ENCODE measurements at regions of chr17 and their contacts with region 1.

Region 1: DNA sequence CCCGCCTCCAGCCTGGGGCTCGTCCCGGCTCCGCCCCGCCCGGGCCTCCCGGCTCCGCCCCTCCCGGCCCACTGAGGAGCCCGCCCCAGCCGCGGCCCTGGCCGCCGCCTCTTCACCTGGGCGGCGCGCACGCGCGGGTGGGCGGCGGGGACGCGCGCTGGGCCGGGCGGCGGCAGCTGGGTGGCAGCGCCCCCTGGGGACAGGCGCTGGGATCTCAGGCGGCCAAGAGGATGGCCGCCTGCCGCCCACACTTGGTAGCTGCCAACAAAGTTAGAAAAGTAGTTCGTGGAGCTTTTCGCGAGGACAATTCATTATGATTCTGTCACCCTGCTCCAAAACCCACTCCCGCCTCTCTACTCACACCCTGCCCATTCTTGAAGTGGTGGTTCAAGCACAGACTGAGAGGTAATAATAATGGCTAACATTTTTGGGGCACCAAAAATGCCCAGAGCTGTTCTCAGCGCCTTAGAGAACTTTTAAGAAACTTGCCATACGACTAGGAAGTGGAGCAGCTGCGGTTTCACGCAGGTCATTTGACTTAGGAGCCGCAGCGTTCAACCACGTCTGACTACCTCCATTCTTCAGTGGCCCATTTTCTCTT is 340 bp upstream of the MYO1D start:
- DNase-seq: peak; percentile 92
- H3K4me3 Mint-ChIP-seq: peak overlapping the region; percentile 54
- H3K27ac Mint-ChIP-seq: peak overlapping the region; percentile 48
- H3K4me1 Mint-ChIP-seq: peaks cover 15% of the 10 kb centered on the region
- H3K27me3 Mint-ChIP-seq: no peaks in the 10 kb centered on the region

Region 2: DNA sequence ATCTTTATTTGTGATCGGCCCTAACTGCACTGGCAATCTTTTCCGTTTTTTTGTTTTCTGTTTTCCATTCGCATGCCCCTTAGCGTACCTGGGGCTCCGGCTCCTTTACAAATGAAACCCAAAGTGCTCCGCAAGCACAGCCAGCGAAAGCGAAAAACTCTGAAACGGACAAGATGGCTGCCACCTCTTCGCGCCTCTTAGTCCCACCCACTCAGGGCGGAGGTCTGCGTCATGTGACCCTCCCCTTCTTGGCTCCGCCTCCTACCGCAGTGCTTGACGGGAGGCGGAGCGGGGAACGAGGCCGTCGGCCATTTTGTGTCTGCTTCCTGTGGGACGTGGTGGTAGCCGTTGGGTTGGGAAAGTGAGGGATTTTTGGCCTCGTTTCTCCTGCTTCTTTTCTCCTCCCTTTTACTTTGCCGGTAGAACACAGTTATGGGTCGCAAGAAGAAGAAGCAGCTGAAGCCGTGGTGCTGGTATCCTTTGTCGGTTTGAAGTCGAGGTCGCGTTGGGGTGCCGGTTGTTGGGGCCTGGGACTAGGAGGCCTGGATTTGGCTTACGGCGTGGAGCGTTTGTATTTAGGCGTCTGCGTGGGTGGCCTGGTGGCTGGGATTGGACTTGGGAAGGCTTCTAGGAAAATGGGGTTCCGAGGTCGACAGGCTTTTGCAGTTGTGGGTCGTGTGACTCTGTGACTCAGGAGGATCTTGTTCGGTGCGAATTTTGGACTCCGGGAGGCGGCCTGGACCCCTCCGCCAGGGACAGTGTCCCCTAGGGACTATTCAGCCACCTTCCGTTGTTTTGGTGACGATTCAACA is 527.2 kb before region 1 on chr17 and contains the start of gene ZNF207:
- CTCF ChIA-PET with region 1: no interaction called
- intact Hi-C with region 1: loop called (anchors 2 kb)
- DNase-seq: peak; percentile 98
- H3K4me3 Mint-ChIP-seq: peak within 1 kb of the TSS; percentile 97
- H3K27ac Mint-ChIP-seq: peak within 1 kb of the TSS; percentile 99
- H3K4me1 Mint-ChIP-seq: peaks cover 40% of the 10 kb centered on the region
- H3K27me3 Mint-ChIP-seq: no peaks in the 10 kb centered on the region
- total RNA-seq, gene ZNF207: 213 to 230 TPM

Region 3: GRCh38 chr17:32486111-32486700 is 391.1 kb before region 1 on chr17:
- CTCF ChIA-PET with region 1: interaction called, 6 read pairs
- intact Hi-C with region 1: loop called (anchors 2 kb)
- DNase-seq: peak; percentile 70
- H3K4me3 Mint-ChIP-seq: peak overlapping the region; percentile 45
- H3K27ac Mint-ChIP-seq: no peak overlapping the region
- H3K4me1 Mint-ChIP-seq: peaks cover 47% of the 10 kb centered on the region
- H3K27me3 Mint-ChIP-seq: no peaks in the 10 kb centered on the region

Region 4: GRCh38 chr17:32783602-32784001 is 93.7 kb before region 1 on chr17:
- CTCF ChIA-PET with region 1: interaction called, 121 read pairs
- intact Hi-C with region 1: loop called (anchors 1 kb)
- DNase-seq: no peak
- H3K4me3 Mint-ChIP-seq: no peak overlapping the region
- H3K27ac Mint-ChIP-seq: no peak overlapping the region
- H3K4me1 Mint-ChIP-seq: no peaks in the 10 kb centered on the region
- H3K27me3 Mint-ChIP-seq: no peaks in the 10 kb centered on the region

Region 5: DNA sequence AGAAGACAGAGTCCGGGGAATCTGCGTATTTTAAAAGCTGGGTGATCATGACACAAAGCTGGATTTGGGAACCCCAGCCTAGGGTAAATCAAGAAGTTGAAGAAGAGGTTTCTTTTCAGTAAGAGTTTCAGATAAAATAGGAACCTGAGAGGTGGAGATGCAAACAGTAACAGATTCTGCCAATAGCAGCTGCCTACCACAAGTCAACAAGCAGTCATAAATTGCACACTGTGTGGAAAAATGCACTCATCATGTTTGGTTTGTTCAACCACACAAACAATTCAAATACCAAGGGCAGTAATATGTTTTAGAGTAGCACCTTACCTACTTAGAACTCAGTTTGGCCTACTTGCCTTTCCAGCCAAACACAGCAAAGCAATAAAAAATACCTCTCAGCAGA is 14.3 kb before region 1 on chr17:
- CTCF ChIA-PET with region 1: interaction called, 21 read pairs
- intact Hi-C with region 1: no loop called
- DNase-seq: no peak
- H3K4me3 Mint-ChIP-seq: no peak overlapping the region
- H3K27ac Mint-ChIP-seq: no peak overlapping the region
- H3K4me1 Mint-ChIP-seq: no peaks in the 10 kb centered on the region
- H3K27me3 Mint-ChIP-seq: peaks cover 2% of the 10 kb centered on the region

Region 6: GRCh38 chr17:32949181-32949580 is 71.9 kb after region 1 on chr17:
- CTCF ChIA-PET with region 1: no interaction called
- intact Hi-C with region 1: no loop called
- DNase-seq: no peak
- H3K4me3 Mint-ChIP-seq: no peak overlapping the region
- H3K27ac Mint-ChIP-seq: no peak overlapping the region
- H3K4me1 Mint-ChIP-seq: no peaks in the 10 kb centered on the region
- H3K27me3 Mint-ChIP-seq: no peaks in the 10 kb centered on the region